ENCODE measurements at regions of chr20 and their contacts with region 1.

Region 1: DNA sequence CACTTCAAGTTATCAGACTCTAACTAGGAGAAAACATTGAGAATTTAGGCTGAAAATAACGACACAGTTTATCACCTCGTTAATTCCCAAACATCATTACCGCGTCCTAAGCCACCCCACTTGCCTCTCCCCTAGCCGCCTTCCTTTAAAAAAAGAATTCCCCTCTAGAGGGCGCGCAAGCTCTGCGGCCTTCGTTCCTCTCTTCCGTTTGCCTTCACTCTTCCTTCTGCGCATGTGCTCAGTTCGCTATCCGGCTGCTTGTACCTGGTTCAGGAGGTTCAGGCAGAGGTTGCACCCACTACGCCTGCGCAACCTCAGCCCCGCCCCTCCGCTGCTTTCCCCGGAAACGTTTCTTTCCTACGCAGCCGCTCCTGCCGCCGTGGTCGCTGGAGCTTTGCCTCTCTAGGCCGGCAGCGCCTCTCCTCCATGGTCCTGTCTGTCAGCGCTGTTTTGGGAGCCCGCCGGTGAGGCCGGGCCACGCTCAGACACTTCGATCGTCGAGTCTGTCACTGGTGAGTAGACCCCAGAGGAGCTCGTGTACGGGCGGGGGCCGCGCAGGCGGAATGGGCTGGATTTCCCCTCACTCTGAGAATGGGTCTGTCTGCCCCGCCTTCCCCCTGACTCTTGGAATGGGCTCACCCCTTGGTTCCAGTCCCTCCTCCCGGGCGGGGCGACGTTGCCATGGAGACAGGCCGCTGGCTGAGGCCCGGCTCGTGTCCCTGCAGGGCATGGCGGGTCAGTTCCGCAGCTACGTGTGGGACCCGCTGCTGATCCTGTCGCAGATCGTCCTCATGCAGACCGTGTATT is at the start of gene SYS1:
- DNase-seq: peak; percentile 95 to 98
- ATAC-seq: peak; percentile 94 to 95
- H3K4me3 ChIP-seq: peak within 1 kb of the TSS; percentile 64
- H3K27ac ChIP-seq: peak within 1 kb of the TSS; percentile 95 to 97
- H3K4me1 ChIP-seq: peaks cover 27% of the 10 kb centered on the region; the same call in 2 of the 3 replicates
- CTCF ChIP-seq: peak; percentile 92
- EP300 ChIP-seq: no peak
- POLR2A ChIP-seq: peak; percentile 69
- RAD21 ChIP-seq: peak; percentile 85 to 87
- polyA plus RNA-seq, gene SYS1: 27.6 and 30.5 TPM in 2 replicates

Region 2: DNA sequence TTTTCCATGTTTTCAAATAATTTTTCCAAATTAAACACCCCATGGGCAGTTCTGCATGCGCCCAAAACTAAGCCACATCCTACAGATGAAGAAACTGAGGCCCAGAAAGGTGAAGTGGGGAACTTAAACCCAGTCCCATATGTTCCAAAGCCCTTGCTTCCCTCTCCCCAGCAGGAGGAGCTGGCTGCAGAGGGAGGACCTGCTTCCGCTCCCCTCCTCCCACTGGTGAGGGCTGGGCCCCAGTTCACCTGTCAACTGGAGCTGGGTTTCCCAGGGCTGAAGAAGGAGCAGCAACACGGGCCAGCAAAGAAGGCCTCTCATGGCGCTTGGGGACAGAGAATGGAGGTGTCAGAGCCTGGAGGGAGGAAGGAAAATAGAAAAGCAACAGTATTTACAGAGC is 57.7 kb before region 1 on chr20:
- CTCF ChIA-PET with region 1: no interaction called
- POLR2A ChIA-PET with region 1: no interaction called
- DNase-seq: no peak
- ATAC-seq: no peak
- H3K4me3 ChIP-seq: no peak overlapping the region
- H3K27ac ChIP-seq: no peak overlapping the region
- H3K4me1 ChIP-seq: no peaks in the 10 kb centered on the region
- CTCF ChIP-seq: no peak
- EP300 ChIP-seq: no peak
- POLR2A ChIP-seq: no peak
- RAD21 ChIP-seq: no peak

Region 3: DNA sequence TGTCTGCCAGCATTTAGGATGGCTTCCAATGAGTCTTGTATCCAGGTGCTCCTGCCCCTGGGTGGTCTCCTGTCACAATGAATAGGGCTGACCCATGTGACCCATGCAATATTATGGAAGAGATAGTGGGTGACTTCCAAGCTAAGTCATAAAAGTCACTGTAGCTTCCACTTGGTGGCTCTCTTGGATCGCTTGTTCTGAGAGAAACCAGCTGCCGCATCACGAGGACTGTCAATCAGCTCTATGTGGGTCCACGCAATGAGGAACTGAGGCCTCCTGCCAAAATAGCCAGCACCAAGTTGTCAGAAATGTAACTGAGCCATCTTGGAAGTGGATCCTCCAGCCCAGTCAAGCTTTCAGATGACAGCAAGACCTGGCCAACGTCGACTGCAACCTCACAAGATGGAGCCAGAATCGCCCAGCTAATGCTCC is 40.0 kb before region 1 on chr20:
- CTCF ChIA-PET with region 1: interaction called, 67 read pairs
- POLR2A ChIA-PET with region 1: interaction called, 5 read pairs
- DNase-seq: peak in 1 of 2 experiments; percentile 63
- ATAC-seq: peak; percentile 61 to 71
- H3K4me3 ChIP-seq: no peak overlapping the region
- H3K27ac ChIP-seq: no peak overlapping the region
- H3K4me1 ChIP-seq: no peaks in the 10 kb centered on the region; the same call in 2 of the 3 replicates
- CTCF ChIP-seq: peak; percentile 59
- EP300 ChIP-seq: no peak
- POLR2A ChIP-seq: no peak
- RAD21 ChIP-seq: peak; percentile 81 to 82

Region 4: DNA sequence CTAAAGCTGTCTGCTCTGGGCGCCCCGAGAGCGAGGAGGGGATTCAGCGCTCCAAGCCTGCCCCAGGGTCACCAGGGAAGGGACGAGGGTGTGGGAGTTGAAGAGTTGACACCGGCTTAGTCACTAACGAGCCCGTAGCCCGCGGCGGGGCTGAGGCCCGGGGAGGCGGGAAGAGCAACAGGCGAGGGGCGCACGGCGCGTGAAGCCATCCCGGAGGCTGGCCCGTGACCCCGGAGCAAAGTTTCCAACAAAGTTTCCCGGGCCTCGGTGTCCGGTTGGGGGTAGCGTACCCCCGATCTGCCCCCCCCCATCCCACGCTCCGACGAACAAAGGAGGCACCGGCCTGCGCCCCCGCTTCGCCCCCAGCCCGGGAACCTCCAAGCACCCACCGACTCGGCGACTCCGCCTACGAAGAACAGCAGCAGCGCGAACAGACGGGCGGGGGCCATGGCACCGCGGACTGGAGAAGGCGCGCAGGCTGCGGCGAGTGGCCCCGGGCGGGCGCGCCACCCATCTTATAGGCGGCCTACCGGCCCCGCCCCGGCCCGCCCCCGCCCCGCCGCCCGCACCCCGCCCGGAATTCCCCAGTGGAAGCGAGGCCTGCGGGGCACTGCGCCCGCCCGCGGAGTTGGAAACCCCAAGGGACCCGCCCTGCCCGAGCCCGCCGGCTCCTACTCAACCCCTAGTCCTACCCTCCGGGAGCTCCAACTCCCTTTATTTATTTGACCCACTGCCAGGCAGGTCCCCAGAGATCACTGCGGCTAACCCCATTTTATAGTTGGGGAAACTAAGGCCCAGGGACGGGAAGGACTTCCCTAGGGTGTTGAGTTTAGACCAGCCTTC is 14.8 kb before region 1 on chr20 and contains the start of gene SDC4:
- CTCF ChIA-PET with region 1: interaction called, 82 read pairs
- POLR2A ChIA-PET with region 1: interaction called, 35 read pairs
- DNase-seq: peak; percentile 51 to 74
- ATAC-seq: peak; percentile 72 to 81
- H3K4me3 ChIP-seq: peak within 1 kb of the TSS; percentile 86
- H3K27ac ChIP-seq: peak within 1 kb of the TSS; percentile 92 to 96
- H3K4me1 ChIP-seq: peaks cover 52% of the 10 kb centered on the region
- CTCF ChIP-seq: no peak
- EP300 ChIP-seq: no peak
- POLR2A ChIP-seq: peak; percentile 99
- RAD21 ChIP-seq: no peak
- polyA plus RNA-seq, gene SDC4: 27.4 and 29.0 TPM in 2 replicates

Region 5: GRCh38 chr20:45415774-45416637 is 53.0 kb after region 1 on chr20 and contains the start of gene PIGT:
- CTCF ChIA-PET with region 1: interaction called, 15 read pairs
- POLR2A ChIA-PET with region 1: interaction called, 9 read pairs
- DNase-seq: peak; percentile 81 to 84
- ATAC-seq: peak; percentile 84 to 93
- H3K4me3 ChIP-seq: peak within 1 kb of the TSS; percentile 92
- H3K27ac ChIP-seq: peak within 1 kb of the TSS; percentile 91
- H3K4me1 ChIP-seq: peaks cover 39% of the 10 kb centered on the region
- CTCF ChIP-seq: no peak
- EP300 ChIP-seq: no peak
- POLR2A ChIP-seq: peak; percentile 93
- RAD21 ChIP-seq: no peak
- polyA plus RNA-seq, gene PIGT: 60.3 and 79.6 TPM in 2 replicates

Region 6: DNA sequence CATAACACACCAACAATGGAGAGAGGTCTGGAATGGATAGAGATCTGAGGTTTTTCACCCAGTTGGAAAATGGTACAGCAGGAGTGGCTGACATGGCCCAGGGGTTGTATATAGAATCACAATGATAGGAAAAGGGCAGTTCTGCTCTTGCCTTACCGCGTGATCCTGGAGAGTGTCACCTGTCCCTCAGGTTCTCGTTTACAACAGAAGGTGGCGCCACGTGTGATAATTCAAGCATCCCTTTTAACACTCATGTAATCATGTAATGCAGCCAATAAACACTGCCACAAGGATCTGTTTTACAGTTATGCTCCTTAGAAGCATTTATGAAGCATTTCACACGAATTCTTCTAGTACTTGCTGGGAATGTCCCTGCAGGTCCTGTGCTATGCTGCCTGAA is 93.6 kb after region 1 on chr20:
- CTCF ChIA-PET with region 1: interaction called, 111 read pairs
- POLR2A ChIA-PET with region 1: no interaction called
- DNase-seq: peak in 1 of 2 experiments; percentile 42
- ATAC-seq: peak; percentile 60 to 78; a peak in 4 of 6 replicates
- H3K4me3 ChIP-seq: no peak overlapping the region
- H3K27ac ChIP-seq: no peak overlapping the region
- H3K4me1 ChIP-seq: no peaks in the 10 kb centered on the region
- CTCF ChIP-seq: peak; percentile 22; the same call in 2 of the 3 replicates
- EP300 ChIP-seq: no peak
- POLR2A ChIP-seq: no peak
- RAD21 ChIP-seq: peak in 1 of 2 experiments; percentile 17; a peak in 1 of 5 replicates

Region 7: DNA sequence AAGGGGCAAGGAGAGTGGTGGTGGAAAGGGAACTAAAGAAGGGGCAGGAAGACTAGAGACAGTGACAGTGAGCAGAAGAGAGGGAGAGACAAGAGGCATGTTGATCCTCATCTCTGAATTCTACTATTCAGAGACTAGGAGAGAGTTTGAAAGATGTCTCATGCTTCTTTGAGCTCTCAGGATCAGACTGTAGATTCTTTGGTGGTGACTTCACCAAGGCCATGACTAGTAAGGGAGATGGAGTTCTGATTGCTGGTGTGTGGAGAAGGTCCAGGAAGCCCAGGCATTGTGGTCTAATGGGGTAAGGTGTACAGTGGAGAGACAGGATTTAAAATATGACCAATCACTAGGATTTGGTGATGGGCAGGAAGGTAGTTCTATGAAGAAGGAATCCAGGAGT is 267.4 kb after region 1 on chr20:
- CTCF ChIA-PET with region 1: no interaction called
- POLR2A ChIA-PET with region 1: no interaction called
- DNase-seq: no peak
- ATAC-seq: no peak
- H3K4me3 ChIP-seq: no peak overlapping the region
- H3K27ac ChIP-seq: no peak overlapping the region
- H3K4me1 ChIP-seq: no peaks in the 10 kb centered on the region
- CTCF ChIP-seq: no peak
- EP300 ChIP-seq: no peak
- POLR2A ChIP-seq: no peak
- RAD21 ChIP-seq: no peak

Measured in A549 (cell line).